ENCODE measurements at regions of chr5 and their contacts with region 1.

Region 1: DNA sequence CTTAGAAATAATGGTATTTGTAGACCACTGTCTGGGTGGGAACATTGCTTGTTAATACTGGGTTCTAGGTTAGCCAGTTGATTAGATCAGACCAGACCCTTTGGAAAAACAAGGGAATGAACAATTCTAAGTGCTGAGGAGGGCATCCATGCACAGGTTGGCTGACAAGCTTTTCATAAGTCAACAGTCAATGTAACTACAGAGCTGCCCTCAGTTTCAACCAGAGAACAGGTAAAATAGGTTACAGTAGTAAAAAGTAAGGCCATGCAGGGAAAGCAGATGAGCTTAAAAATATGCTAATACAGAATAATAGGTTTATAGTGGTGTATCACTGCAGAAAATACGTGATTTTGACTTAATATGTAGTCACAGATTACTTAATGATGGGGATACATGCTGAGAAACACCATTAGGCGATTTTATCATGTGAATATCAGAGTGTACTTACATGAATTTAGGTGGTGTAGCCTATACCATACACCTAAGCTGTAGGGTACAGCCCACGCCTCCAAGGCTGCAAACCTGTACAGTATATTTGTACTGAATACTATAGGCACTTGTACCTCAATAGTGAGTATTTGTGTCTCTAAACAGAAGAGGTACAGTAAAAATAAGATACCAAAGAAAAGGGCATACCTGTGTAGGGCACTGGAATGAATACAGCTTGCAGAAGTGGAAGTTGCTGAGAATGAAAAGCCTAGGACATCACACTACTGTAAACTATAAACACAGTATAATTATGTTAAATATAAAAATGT is 6.1 kb upstream of the FGF18 start:
- DNase-seq: no peak
- ATAC-seq: no peak
- H3K4me3 Mint-ChIP-seq: no peak overlapping the region
- H3K27ac Mint-ChIP-seq: peak overlapping the region in 4 of 10 donors; percentile 15 to 82 (median 34)
- H3K4me1 Mint-ChIP-seq: peaks cover 9 to 17% (median 12%) of the 10 kb centered on the region in 4 donors
- H3K27me3 Mint-ChIP-seq: no peaks in the 10 kb centered on the region

Region 2: GRCh38 chr5:171365351-171365750 is 48.0 kb before region 1 on chr5:
- POLR2A ChIA-PET with region 1: no interaction called
- DNase-seq: no peak
- ATAC-seq: no peak
- H3K4me3 Mint-ChIP-seq: no peak overlapping the region
- H3K27ac Mint-ChIP-seq: peak overlapping the region in 2 of 10 donors; percentile 32 to 46
- H3K4me1 Mint-ChIP-seq: peaks cover 0 to 1% (median 0%) of the 10 kb centered on the region in 4 donors
- H3K27me3 Mint-ChIP-seq: peaks cover 7 to 35% (median 17%) of the 10 kb centered on the region in 5 donors

Region 3: GRCh38 chr5:171379961-171380360 is 33.4 kb before region 1 on chr5:
- POLR2A ChIA-PET with region 1: interaction called, 10 read pairs
- DNase-seq: no peak
- ATAC-seq: no peak
- H3K4me3 Mint-ChIP-seq: no peak overlapping the region
- H3K27ac Mint-ChIP-seq: no peak overlapping the region
- H3K4me1 Mint-ChIP-seq: no peaks in the 10 kb centered on the region
- H3K27me3 Mint-ChIP-seq: no peaks in the 10 kb centered on the region

Region 4: GRCh38 chr5:171442287-171443042 is 29.1 kb after region 1 on chr5:
- POLR2A ChIA-PET with region 1: no interaction called
- DNase-seq: no peak
- ATAC-seq: no peak
- H3K4me3 Mint-ChIP-seq: no peak overlapping the region
- H3K27ac Mint-ChIP-seq: peak overlapping the region in 2 of 10 donors; percentile 49 to 60
- H3K4me1 Mint-ChIP-seq: no peaks in the 10 kb centered on the region
- H3K27me3 Mint-ChIP-seq: peaks cover 0 to 7% (median 5%) of the 10 kb centered on the region in 5 donors

Region 5: GRCh38 chr5:171520300-171521174 is 107.2 kb after region 1 on chr5:
- POLR2A ChIA-PET with region 1: no interaction called
- DNase-seq: no peak
- ATAC-seq: no peak
- H3K4me3 Mint-ChIP-seq: no peak overlapping the region
- H3K27ac Mint-ChIP-seq: no peak overlapping the region
- H3K4me1 Mint-ChIP-seq: peaks cover 0 to 4% (median 0%) of the 10 kb centered on the region in 4 donors
- H3K27me3 Mint-ChIP-seq: peaks cover 4 to 34% (median 13%) of the 10 kb centered on the region in 5 donors